Activated CD8-positive, alpha-beta T cell treated with anti-CD3 and anti-CD28 coated beads, Interleukin-2, amount 10 ng/mL, durations not matched to agents 7 days and 5 days (primary cell): ENCODE measurements at regions of chr17 and their contacts with region 1.

Region 1: DNA sequence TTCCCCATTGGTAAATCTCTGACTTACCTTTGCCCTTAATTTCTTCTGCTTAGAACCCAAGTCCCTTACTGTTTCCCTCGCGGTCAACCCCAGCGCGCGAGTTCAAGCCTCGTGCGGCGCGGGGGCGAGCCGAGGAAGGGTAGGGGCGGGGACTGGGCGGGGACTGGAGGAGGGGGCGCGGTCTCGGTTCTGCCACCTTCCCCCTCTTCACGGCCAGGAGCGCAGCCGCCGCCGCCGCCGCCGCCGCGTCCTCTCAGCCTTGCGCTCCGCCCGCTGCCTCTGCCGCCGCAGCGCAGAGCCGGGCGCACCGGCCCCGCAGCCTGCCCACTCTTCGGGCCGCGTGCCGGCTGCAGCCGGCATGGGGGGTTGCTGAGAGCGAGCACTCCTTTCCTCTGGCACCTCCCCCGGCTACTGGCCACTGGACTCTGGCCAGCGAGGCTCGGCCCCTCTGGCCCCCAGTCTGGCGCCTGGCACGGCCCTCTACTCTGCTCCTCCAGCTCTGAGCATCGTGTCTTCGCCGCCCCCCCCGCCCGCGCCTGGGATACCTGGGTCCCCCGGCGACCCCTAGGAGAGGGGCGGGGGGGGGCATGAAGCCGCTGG is at the start of gene RAPGEFL1:
- DNase-seq: peak; percentile 88
- ATAC-seq: peak; percentile 95
- H3K4me3 Mint-ChIP-seq: peak within 1 kb of the TSS; percentile 18
- H3K27ac Mint-ChIP-seq: peak within 1 kb of the TSS; percentile 28
- H3K4me1 Mint-ChIP-seq: peaks cover 9% of the 10 kb centered on the region
- H3K27me3 Mint-ChIP-seq: no peaks in the 10 kb centered on the region
- total RNA-seq, gene RAPGEFL1: 4.8 to 5.3 TPM

Region 2: DNA sequence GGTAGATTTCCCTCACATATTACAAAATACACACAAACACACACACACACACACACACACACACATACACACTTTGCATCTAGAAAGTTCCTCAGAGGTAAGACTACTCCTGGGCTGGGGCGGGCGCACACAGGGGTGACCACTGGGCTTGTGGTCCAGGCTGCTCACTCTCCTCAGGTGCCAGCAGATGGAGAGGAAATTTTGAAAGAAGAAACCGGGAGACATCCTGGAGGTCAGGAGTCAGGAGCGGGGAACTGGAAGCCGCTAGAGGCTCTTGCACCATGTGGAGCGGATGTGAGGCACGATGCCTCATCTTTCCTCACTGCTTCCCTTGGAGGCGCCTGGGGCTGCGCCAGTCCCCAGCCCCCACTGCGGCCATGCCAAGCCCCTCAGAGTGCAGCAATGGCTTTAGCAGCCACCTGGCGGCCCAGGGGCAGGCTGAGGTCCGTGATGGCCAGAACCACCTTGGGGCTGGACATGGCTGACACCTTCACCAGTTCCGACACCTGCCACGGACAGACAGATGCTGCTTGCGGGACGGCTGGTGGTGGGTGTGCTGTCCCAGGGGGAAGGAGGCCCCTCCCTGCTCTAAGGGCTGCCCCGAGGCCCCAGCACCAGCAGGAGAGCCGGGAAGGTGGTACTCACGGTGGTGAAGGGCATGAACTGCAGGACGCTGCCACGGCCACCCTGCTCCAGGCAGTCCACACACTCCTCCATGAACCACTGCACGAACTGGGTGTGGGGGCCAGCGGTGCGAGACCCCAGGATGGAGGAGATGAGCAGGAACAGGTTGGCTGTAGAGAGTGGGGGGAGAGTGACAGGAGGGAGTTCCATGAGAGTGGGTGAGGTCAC is 158.0 kb before region 1 on chr17:
- CTCF ChIA-PET with region 1: interaction called, 10 read pairs
- POLR2A ChIA-PET with region 1: no interaction called
- DNase-seq: no peak
- ATAC-seq: no peak
- H3K4me3 Mint-ChIP-seq: no peak overlapping the region
- H3K27ac Mint-ChIP-seq: no peak overlapping the region
- H3K4me1 Mint-ChIP-seq: peaks cover 3% of the 10 kb centered on the region
- H3K27me3 Mint-ChIP-seq: no peaks in the 10 kb centered on the region